PC-3 (cell line): ENCODE measurements at regions of chr19 and their contacts with region 1.

Region 1: DNA sequence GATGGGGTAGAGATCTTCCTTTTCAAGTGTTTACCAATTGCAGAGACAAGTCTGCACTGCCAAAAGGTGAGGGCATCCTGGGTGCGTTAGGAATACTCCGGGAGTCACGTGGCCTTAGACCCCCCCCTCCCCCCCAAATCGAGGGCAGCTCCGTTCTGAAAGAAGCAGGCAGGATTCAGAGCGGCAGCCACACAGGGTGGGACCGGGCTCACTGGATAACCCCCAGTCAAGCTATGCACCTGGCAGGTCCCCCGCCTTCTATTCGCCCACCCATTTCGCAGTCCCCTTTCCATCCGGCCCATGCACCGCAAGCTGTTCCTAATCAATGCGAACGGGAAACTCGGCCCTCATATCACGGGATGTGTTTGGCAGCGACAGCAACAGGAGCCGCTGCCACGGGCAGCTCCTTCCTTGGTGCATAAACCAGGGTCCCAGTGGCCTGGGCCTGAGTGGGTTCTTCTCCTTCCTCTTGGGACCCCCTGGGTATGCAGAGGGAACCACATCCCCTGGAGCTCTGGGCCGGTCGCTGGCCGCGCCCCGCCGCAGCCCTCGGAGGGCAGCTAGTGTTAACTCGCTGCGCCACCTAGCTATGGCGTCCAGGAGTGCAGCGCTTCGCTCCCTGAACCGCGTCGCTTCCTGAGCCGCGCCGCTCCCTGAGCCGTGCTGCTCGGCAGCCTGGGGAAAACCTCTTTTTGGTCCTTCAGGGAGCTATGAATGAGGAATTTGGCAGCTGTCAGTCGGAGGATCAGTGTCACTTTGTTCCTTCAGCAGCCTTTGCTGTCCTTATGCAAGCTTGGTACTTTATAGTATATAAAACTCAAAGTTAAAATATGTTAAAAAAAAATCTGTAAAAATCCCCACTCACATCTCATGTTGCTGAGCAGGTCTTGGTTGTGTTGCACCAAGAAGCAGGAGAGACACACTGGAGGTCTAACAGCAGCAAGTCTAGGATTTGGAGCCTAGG is 41.4 kb downstream of the LYL1 start:
- DNase-seq: peak; percentile 95
- ATAC-seq: peak; percentile 75
- H3K4me3 ChIP-seq: peak overlapping the region; percentile 65
- H3K27ac ChIP-seq: peak overlapping the region; percentile 8; the same call in 1 of the 2 replicates
- H3K4me1 ChIP-seq: peaks cover 31% of the 10 kb centered on the region
- H3K27me3 ChIP-seq: no peaks in the 10 kb centered on the region
- CTCF ChIP-seq: peak; percentile 99

Region 2: DNA sequence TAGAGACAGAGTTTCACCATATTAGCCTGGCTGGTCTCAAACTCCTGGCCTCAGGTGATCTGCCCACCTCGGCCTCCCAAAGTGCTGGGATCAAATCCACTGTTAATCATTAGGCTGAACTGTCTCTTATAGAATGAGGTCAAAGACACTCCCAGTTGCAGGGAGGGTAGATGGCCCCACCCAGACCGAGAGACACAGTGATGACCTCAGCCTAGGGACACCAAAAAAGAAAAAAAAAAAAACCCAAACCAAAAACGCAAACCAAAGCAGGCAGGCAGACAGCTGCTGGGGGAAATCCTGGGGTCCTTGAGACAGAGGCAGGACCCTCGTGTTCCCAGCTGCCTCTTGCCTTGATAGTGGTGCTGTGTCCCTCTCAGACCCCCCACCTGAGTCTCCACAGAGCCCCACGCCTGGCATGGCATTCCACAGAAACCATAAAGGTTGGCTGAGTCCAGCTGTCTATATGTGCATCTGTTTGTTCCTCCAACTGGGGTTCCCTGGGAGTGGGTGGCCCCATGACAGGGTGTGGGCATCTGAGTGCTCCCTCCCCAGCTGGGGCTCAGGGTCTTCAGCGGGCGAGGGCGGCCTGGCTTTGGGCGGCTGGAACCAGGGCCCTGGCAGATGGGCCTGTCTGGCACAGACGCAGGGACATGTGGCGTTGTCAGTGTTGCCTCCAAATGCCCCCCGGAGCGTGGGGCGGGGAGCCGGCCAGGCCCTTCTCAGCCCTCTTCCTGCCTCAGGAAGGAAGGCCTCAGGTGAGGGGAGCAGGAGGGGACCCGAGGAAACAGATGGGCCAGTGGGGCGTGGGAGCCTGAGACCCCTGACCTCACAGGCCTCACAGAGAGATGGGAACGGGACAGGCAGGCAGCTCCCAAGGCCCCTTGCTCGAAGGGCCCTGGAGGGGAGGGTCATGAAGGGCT is 86.7 kb before region 1 on chr19:
- CTCF ChIA-PET with region 1: interaction called, 16 read pairs
- POLR2A ChIA-PET with region 1: no interaction called
- intact Hi-C with region 1: no loop called
- DNase-seq: no peak
- ATAC-seq: no peak
- H3K4me3 ChIP-seq: no peak overlapping the region
- H3K27ac ChIP-seq: no peak overlapping the region
- H3K4me1 ChIP-seq: no peaks in the 10 kb centered on the region
- H3K27me3 ChIP-seq: no peaks in the 10 kb centered on the region
- CTCF ChIP-seq: no peak

Region 3: DNA sequence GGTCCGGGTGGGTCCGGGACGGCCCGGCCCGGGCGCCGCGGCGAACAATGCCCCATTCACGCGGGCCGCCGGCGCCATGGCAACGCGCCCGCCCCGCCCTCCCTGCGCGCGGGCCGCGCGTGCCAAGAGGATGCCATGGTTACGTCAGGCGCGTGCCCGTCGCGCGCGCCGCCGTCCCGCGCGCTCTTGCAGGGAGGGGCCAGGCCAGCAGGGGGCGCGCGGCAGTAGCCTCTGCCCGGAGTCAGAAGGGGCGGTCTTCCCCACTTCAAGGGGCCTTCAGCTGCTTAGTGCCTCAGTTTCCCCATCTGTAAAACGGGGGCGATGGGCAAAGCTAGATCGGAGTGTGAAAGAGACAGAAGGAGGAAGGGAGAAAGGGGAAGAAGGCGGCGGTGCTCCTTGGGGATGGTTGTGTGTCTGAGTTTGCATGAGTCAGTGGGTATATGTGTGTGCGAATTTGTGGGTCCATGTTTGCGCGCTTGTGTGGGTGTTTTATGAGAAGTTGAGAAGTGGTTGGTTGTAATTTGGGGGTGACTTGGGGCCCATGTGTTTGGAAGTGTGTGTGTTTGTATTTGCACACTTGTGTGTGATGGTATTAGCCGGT is 77.6 kb before region 1 on chr19:
- CTCF ChIA-PET with region 1: no interaction called
- POLR2A ChIA-PET with region 1: interaction called, 16 read pairs
- intact Hi-C with region 1: loop called (anchors 1 kb)
- DNase-seq: peak; percentile 89
- ATAC-seq: peak; percentile 84
- H3K4me3 ChIP-seq: peak overlapping the region; percentile 61
- H3K27ac ChIP-seq: no peak overlapping the region
- H3K4me1 ChIP-seq: no peaks in the 10 kb centered on the region
- H3K27me3 ChIP-seq: no peaks in the 10 kb centered on the region
- CTCF ChIP-seq: peak; percentile 94

Region 4: DNA sequence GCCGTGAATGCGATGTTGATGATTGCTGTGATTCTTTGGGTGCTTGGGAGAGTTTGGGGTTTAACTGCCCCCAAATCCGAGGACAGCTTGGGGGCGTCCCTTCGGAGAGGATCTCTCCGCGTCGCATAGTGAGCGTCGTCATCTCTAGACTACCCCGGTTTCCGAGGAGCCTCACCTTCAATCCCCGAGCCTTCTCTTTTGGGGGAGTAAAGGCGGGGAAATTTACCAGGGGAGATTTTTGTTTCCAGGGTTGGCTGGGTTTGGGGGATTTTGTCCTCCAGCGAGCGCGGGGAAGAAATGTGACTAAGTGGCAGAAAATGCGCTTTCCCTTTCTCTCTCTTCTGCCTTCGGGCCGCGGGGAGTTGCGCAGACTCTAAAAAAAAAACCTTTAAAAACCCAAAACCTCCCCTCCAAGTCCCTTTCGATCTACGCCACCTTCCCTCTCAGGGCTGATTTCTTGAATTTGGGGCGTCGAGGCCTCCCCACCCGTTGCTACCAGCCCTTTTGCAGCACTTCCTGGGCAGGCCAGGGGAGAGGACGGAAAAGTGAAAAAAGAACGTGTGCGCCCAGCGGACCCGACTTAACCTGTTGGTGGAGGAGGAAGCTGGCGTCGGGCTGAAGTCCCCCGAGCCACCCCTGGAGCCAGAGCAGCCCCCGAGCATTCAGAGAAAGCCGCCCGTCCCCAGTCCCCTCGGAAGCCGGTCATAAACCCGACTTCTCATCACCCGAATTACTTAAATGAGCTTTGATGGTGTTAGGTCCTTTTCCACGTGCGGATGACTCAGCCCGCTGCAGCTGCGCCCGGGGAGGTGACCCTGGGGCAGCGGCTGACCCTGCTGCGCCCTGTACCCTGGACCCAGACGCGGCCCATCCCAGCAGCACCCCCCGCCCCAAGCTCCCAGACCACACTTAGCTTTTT is 48.3 kb before region 1 on chr19:
- CTCF ChIA-PET with region 1: interaction called, 14 read pairs
- POLR2A ChIA-PET with region 1: interaction called, 3 read pairs
- intact Hi-C with region 1: loop called (anchors 2 kb)
- DNase-seq: peak; percentile 78
- ATAC-seq: peak; percentile 21
- H3K4me3 ChIP-seq: peak overlapping the region; percentile 75
- H3K27ac ChIP-seq: peak overlapping the region; percentile 81
- H3K4me1 ChIP-seq: peaks cover 48% of the 10 kb centered on the region
- H3K27me3 ChIP-seq: no peaks in the 10 kb centered on the region
- CTCF ChIP-seq: no peak

Region 5: GRCh38 chr19:13033819-13034611 is 27.2 kb before region 1 on chr19:
- CTCF ChIA-PET with region 1: interaction called, 10 read pairs
- POLR2A ChIA-PET with region 1: interaction called, 5 read pairs
- intact Hi-C with region 1: loop called (anchors 1 kb)
- DNase-seq: peak; percentile 79
- ATAC-seq: peak; percentile 29
- H3K4me3 ChIP-seq: no peak overlapping the region
- H3K27ac ChIP-seq: peak overlapping the region; percentile 85
- H3K4me1 ChIP-seq: peaks cover 71% of the 10 kb centered on the region
- H3K27me3 ChIP-seq: no peaks in the 10 kb centered on the region
- CTCF ChIP-seq: peak; percentile 94